ENCODE measurements at regions of chr1 and their contacts with region 1.

Region 1: GRCh38 chr1:243312952-243313634 is 57.3 kb downstream of the SDCCAG8 start:
- DNase-seq: peak; percentile 71
- ATAC-seq: peak; percentile 71
- H3K4me3 ChIP-seq: no peak overlapping the region
- H3K4me3 Mint-ChIP-seq: peak overlapping the region; percentile 70
- H3K27ac ChIP-seq: peak overlapping the region; percentile 50 to 77
- H3K27ac Mint-ChIP-seq: peak overlapping the region; percentile 86
- H3K4me1 ChIP-seq: peaks cover 18 to 20% of the 10 kb centered on the region in 2 donors
- H3K4me1 Mint-ChIP-seq: peaks cover 25% of the 10 kb centered on the region
- H3K27me3 ChIP-seq: no peaks in the 10 kb centered on the region
- H3K27me3 Mint-ChIP-seq: no peaks in the 10 kb centered on the region
- CTCF ChIP-seq: no peak

Region 2: GRCh38 chr1:243351337-243351736 is 38.2 kb after region 1 on chr1:
- CTCF ChIA-PET with region 1: no interaction called
- POLR2A ChIA-PET with region 1: no interaction called
- intact Hi-C with region 1: no loop called
- DNase-seq: no peak
- ATAC-seq: no peak
- H3K4me3 ChIP-seq: no peak overlapping the region
- H3K4me3 Mint-ChIP-seq: no peak overlapping the region
- H3K27ac ChIP-seq: no peak overlapping the region
- H3K27ac Mint-ChIP-seq: no peak overlapping the region
- H3K4me1 ChIP-seq: peaks cover 3 to 9% of the 10 kb centered on the region in 2 donors
- H3K4me1 Mint-ChIP-seq: peaks cover 15% of the 10 kb centered on the region
- H3K27me3 ChIP-seq: no peaks in the 10 kb centered on the region
- H3K27me3 Mint-ChIP-seq: no peaks in the 10 kb centered on the region
- CTCF ChIP-seq: no peak

Region 3: DNA sequence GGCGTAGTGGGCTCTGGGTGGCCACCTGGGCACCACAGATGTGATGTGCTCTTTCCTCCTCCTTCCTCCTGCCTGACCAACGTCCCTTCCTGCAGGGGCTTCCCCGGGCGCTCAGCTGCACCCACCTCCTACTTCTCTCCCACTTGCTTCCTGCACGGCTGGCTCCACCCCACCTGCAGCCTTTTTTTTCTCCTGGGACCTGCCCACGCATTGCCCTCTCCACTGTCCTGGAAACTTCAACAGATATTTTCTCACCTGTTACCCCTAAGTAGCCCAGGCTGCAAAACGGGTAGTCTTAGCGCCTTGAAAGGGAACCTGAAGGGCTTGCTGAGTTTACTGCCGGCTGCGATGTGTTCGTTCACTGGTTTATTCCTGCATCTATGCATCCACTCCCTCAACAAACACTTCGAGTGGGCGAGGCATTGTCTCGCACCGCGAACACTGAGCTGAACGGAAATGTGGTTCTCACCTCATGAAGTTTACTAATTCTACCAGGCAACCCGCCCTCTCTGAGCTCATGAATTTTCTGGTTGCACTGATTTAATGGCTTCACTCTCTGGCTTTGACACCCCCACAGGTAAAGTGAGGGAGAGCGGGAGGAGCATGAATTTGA is 761.6 kb after region 1 on chr1:
- CTCF ChIA-PET with region 1: no interaction called
- POLR2A ChIA-PET with region 1: interaction called, 13 read pairs
- intact Hi-C with region 1: no loop called
- DNase-seq: peak; percentile 79
- ATAC-seq: peak; percentile 72
- H3K4me3 ChIP-seq: peak overlapping the region; percentile 32 to 59 (median 52)
- H3K4me3 Mint-ChIP-seq: peak overlapping the region; percentile 87
- H3K27ac ChIP-seq: peak overlapping the region; percentile 78 to 81
- H3K27ac Mint-ChIP-seq: peak overlapping the region; percentile 94
- H3K4me1 ChIP-seq: peaks cover 52 to 56% of the 10 kb centered on the region in 2 donors
- H3K4me1 Mint-ChIP-seq: peaks cover 52% of the 10 kb centered on the region
- H3K27me3 ChIP-seq: no peaks in the 10 kb centered on the region
- H3K27me3 Mint-ChIP-seq: no peaks in the 10 kb centered on the region
- CTCF ChIP-seq: no peak